Mammary epithelial cell (primary cell): ENCODE measurements at regions of chr2 and their contacts with region 1.

Region 1: DNA sequence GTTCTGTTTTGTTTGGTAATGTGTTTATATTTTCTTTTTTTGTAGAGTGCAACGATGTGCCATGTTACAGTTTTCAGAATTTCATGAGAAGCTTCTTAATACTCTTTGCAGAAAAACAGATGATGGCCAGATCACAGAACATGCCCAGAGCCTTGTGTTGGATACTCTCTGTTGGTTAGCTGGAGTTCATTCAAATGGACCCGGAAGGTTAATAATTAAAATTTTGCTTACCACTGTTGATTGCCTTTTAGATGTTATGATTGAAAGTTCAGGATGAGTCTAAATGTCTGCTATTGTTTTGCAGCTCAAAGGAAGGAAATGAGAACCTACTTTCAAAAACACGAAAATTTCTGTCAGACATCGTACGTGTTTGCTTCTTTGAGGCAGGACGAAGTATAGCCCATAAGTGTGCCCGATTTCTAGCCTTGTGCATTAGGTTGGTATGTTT is 85.2 kb downstream of the BIRC6 start:
- DNase-seq: no peak
- H3K4me3 ChIP-seq: no peak overlapping the region
- H3K27ac ChIP-seq: no peak overlapping the region
- H3K4me1 ChIP-seq: no peaks in the 10 kb centered on the region
- H3K27me3 ChIP-seq: no peaks in the 10 kb centered on the region
- CTCF ChIP-seq: no peak

Region 2: GRCh38 chr2:32384529-32384928 is 57.5 kb before region 1 on chr2:
- CTCF ChIA-PET with region 1: no interaction called
- dilution Hi-C with region 1: loop called (anchors 5 kb)
- in situ Hi-C with region 1: no loop called
- intact Hi-C with region 1: no loop called
- DNase-seq: no peak
- H3K4me3 ChIP-seq: no peak overlapping the region
- H3K27ac ChIP-seq: no peak overlapping the region
- H3K4me1 ChIP-seq: no peaks in the 10 kb centered on the region
- H3K27me3 ChIP-seq: no peaks in the 10 kb centered on the region
- CTCF ChIP-seq: no peak

Region 3: DNA sequence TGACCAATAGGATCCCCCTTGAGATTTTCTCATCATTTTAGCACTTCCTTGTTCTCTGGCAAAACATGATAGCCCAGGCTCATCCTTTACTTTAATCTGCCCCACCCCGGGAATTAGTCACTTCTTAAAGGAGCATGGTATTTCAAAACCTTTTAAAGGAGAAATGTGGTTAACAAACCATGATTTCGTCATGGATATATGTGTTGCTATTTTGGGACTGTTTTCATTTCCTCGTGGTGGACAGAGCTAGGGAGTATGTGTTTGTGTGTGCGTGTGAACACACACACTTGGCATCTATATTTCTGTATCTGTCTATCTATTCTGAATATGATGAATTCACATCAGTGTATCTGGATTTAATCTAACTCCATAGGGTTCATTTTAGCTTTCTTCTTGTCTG is 42.9 kb after region 1 on chr2:
- CTCF ChIA-PET with region 1: no interaction called
- dilution Hi-C with region 1: no loop called
- in situ Hi-C with region 1: no loop called
- intact Hi-C with region 1: no loop called
- DNase-seq: peak; percentile 89
- H3K4me3 ChIP-seq: no peak overlapping the region
- H3K27ac ChIP-seq: peak overlapping the region; percentile 24
- H3K4me1 ChIP-seq: peaks cover 9% of the 10 kb centered on the region
- H3K27me3 ChIP-seq: no peaks in the 10 kb centered on the region
- CTCF ChIP-seq: no peak

Region 4: GRCh38 chr2:32553829-32554432 is 111.9 kb after region 1 on chr2:
- CTCF ChIA-PET with region 1: no interaction called
- dilution Hi-C with region 1: no loop called
- in situ Hi-C with region 1: no loop called
- intact Hi-C with region 1: no loop called
- DNase-seq: peak; percentile 6
- H3K4me3 ChIP-seq: no peak overlapping the region
- H3K27ac ChIP-seq: no peak overlapping the region
- H3K4me1 ChIP-seq: no peaks in the 10 kb centered on the region
- H3K27me3 ChIP-seq: no peaks in the 10 kb centered on the region
- CTCF ChIP-seq: peak; percentile 53 to 72